IMR-90 (cell line): ENCODE measurements at regions of chr5 and their contacts with region 1.

Region 1: GRCh38 chr5:119708076-119708790 is 78.9 kb downstream of the FAM170A start:
- DNase-seq: no peak
- ATAC-seq: no peak
- H3K4me3 ChIP-seq: no peak overlapping the region
- H3K27ac ChIP-seq: no peak overlapping the region
- H3K4me1 ChIP-seq: no peaks in the 10 kb centered on the region
- H3K27me3 ChIP-seq: no peaks in the 10 kb centered on the region
- CTCF ChIP-seq: no peak
- POLR2A ChIP-seq: no peak
- RAD21 ChIP-seq: no peak

Region 2: GRCh38 chr5:119666542-119666941 is 41.7 kb before region 1 on chr5:
- CTCF ChIA-PET with region 1: no interaction called
- POLR2A ChIA-PET with region 1: no interaction called
- dilution Hi-C with region 1: no loop called
- in situ Hi-C with region 1: no loop called
- intact Hi-C with region 1: no loop called
- DNase-seq: no peak
- ATAC-seq: no peak
- H3K4me3 ChIP-seq: no peak overlapping the region
- H3K27ac ChIP-seq: no peak overlapping the region
- H3K4me1 ChIP-seq: no peaks in the 10 kb centered on the region
- H3K27me3 ChIP-seq: no peaks in the 10 kb centered on the region
- CTCF ChIP-seq: no peak
- POLR2A ChIP-seq: no peak
- RAD21 ChIP-seq: no peak

Region 3: GRCh38 chr5:120479066-120479465 is 770.8 kb after region 1 on chr5:
- CTCF ChIA-PET with region 1: no interaction called
- POLR2A ChIA-PET with region 1: no interaction called
- dilution Hi-C with region 1: no loop called
- in situ Hi-C with region 1: no loop called
- intact Hi-C with region 1: loop called (anchors 5 kb)
- DNase-seq: peak; percentile 62
- ATAC-seq: peak; percentile 27; the same call in 1 of the 2 replicates
- H3K4me3 ChIP-seq: no peak overlapping the region
- H3K27ac ChIP-seq: no peak overlapping the region
- H3K4me1 ChIP-seq: peaks cover 3% of the 10 kb centered on the region; the same call in 1 of the 2 replicates
- H3K27me3 ChIP-seq: no peaks in the 10 kb centered on the region
- CTCF ChIP-seq: no peak
- POLR2A ChIP-seq: no peak
- RAD21 ChIP-seq: no peak